Esophagus muscularis mucosa (tissue), 4 donors: ENCODE measurements at regions of chr3 and their contacts with region 1.

Region 1: GRCh38 chr3:124887177-124887931 is at the start of gene ITGB5:
- DNase-seq: peak; percentile 94
- H3K4me3 ChIP-seq: peak within 1 kb of the TSS; percentile 81 to 92 (median 88)
- H3K27ac ChIP-seq: peak within 1 kb of the TSS; percentile 91 to 94 (median 92)
- H3K4me1 ChIP-seq: peaks cover 33 to 46% (median 39%) of the 10 kb centered on the region in 4 donors
- H3K27me3 ChIP-seq: no peaks in the 10 kb centered on the region
- CTCF ChIP-seq: no peak
- EP300 ChIP-seq: no peak
- POLR2A ChIP-seq: peak; percentile 60
- total RNA-seq, gene ITGB5: 114 to 284 (median 188) TPM

Region 2: GRCh38 chr3:124850633-124851032 is 36.7 kb before region 1 on chr3:
- intact Hi-C with region 1: loop called (anchors 5 kb)
- DNase-seq: no peak
- H3K4me3 ChIP-seq: no peak overlapping the region
- H3K27ac ChIP-seq: peak overlapping the region; percentile 4 to 55 (median 38)
- H3K4me1 ChIP-seq: peaks cover 25 to 35% (median 29%) of the 10 kb centered on the region in 4 donors
- H3K27me3 ChIP-seq: no peaks in the 10 kb centered on the region
- CTCF ChIP-seq: peak in 1 of 3 experiments; percentile 3
- EP300 ChIP-seq: no peak
- POLR2A ChIP-seq: no peak

Region 3: DNA sequence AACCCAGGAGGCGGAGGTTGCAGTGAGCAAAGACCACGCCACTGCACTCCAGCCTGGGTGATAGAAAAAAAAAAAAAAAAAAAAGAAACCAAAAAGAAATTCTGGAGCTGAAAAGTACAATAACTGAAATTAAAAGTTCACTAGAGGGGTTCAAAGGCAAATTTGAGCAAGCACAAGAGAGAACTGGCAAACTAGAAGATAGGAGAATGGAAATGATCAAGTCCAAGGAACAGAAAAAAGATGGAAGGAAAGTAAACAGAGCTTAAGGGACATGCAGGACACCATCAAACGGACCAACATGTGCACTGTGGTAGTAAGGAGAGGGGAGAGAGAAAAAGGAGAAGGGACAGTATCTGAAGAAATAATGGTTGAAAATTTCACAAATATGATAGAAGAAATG is 619.8 kb after region 1 on chr3:
- intact Hi-C with region 1: no loop called
- DNase-seq: no peak
- H3K4me3 ChIP-seq: no peak overlapping the region
- H3K27ac ChIP-seq: no peak overlapping the region
- H3K4me1 ChIP-seq: peaks cover 6 to 19% (median 10%) of the 10 kb centered on the region in 4 donors
- H3K27me3 ChIP-seq: no peaks in the 10 kb centered on the region
- CTCF ChIP-seq: no peak
- EP300 ChIP-seq: no peak
- POLR2A ChIP-seq: no peak